Mammary epithelial cell (primary cell): ENCODE measurements at regions of chr18 and their contacts with region 1.

Region 1: GRCh38 chr18:44895176-44895798 is 214.6 kb downstream of the SETBP1 start:
- DNase-seq: peak; percentile 54
- H3K4me3 ChIP-seq: no peak overlapping the region
- H3K27ac ChIP-seq: no peak overlapping the region
- H3K4me1 ChIP-seq: peaks cover 9% of the 10 kb centered on the region
- H3K27me3 ChIP-seq: no peaks in the 10 kb centered on the region
- CTCF ChIP-seq: peak; percentile 56 to 76

Region 2: GRCh38 chr18:43380104-43380672 is 1515.1 kb before region 1 on chr18:
- CTCF ChIA-PET with region 1: no interaction called
- dilution Hi-C with region 1: no loop called
- in situ Hi-C with region 1: no loop called
- intact Hi-C with region 1: no loop called
- DNase-seq: no peak
- H3K4me3 ChIP-seq: no peak overlapping the region
- H3K27ac ChIP-seq: no peak overlapping the region
- H3K4me1 ChIP-seq: no peaks in the 10 kb centered on the region
- H3K27me3 ChIP-seq: no peaks in the 10 kb centered on the region
- CTCF ChIP-seq: no peak

Region 3: DNA sequence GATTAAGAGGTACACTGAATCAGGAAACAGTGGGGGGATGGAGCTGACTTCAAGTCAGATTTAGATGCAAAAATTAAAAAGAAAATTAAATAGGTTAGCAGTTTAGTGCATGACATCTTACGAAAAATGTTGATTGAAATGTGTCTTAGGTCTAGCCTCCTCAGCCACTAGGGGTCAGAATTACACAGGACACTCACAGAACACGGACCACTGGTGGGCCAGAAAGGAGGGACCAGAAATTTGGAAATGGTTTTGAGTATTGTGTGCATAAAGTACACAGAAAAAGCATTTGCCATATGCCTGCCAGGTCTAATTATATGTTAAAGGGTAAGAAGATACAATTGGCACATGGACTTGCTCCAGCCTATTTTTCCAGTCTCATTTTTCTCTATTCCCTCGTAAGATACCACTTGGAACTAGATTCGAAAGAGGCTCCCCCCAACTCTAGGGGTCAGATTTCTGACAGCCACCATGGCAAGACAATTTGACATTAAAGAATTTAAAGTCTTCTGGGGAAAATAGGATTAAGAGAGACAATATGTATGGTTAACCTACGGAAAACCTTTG is 764.8 kb before region 1 on chr18:
- CTCF ChIA-PET with region 1: no interaction called
- dilution Hi-C with region 1: no loop called
- in situ Hi-C with region 1: loop called in 1 of 2 experiments (anchors 25 kb)
- intact Hi-C with region 1: loop called (anchors 1 kb)
- DNase-seq: peak; percentile 26
- H3K4me3 ChIP-seq: no peak overlapping the region
- H3K27ac ChIP-seq: no peak overlapping the region
- H3K4me1 ChIP-seq: no peaks in the 10 kb centered on the region
- H3K27me3 ChIP-seq: no peaks in the 10 kb centered on the region
- CTCF ChIP-seq: peak; percentile 85 to 87

Region 4: DNA sequence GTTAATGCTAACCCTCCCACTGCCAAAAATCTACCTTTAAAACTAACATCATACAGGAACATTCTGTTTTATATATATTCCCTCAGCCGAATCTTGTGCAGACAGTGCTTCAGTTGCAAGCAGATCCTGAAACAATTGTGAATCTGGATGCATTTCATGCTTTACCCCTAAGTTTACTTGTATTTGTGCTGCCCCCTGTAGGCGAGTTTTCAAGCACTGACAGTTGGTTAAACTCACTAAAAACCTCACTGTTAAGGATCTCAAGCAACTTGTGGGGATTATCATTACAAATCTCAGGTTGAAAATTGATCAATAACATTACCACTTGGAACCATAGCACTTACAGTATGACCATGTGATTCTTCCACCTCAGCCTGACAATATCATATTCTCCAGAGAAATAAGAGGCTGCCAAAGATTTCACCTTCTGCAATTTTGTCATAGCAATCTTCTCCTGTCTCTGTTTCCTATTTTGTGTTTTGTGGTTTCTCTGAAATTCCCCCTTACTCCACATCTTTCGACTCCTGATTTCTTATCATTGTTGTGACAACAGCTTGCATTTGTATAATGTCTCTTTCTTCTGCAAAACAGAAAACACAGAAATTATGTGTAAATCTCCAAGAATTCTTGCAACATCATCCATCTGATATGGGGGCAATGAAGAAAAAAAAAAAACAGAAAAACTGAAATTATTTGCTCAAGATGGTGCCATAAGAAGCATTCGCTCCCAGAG is 569.2 kb before region 1 on chr18:
- CTCF ChIA-PET with region 1: no interaction called
- dilution Hi-C with region 1: no loop called
- in situ Hi-C with region 1: no loop called
- intact Hi-C with region 1: loop called (anchors 5 kb)
- DNase-seq: peak; percentile 40
- H3K4me3 ChIP-seq: no peak overlapping the region
- H3K27ac ChIP-seq: no peak overlapping the region
- H3K4me1 ChIP-seq: no peaks in the 10 kb centered on the region
- H3K27me3 ChIP-seq: no peaks in the 10 kb centered on the region
- CTCF ChIP-seq: peak; percentile 75 to 76

Region 5: GRCh38 chr18:44437603-44438002 is 457.7 kb before region 1 on chr18:
- CTCF ChIA-PET with region 1: no interaction called
- dilution Hi-C with region 1: no loop called
- in situ Hi-C with region 1: no loop called
- intact Hi-C with region 1: loop called (anchors 2 kb)
- DNase-seq: no peak
- H3K4me3 ChIP-seq: no peak overlapping the region
- H3K27ac ChIP-seq: no peak overlapping the region
- H3K4me1 ChIP-seq: no peaks in the 10 kb centered on the region
- H3K27me3 ChIP-seq: no peaks in the 10 kb centered on the region
- CTCF ChIP-seq: no peak

Region 6: GRCh38 chr18:44579028-44579702 is 316.1 kb before region 1 on chr18:
- CTCF ChIA-PET with region 1: no interaction called
- dilution Hi-C with region 1: no loop called
- in situ Hi-C with region 1: no loop called
- intact Hi-C with region 1: loop called (anchors 5 kb)
- DNase-seq: peak; percentile 59
- H3K4me3 ChIP-seq: no peak overlapping the region
- H3K27ac ChIP-seq: peak overlapping the region; percentile 1
- H3K4me1 ChIP-seq: peaks cover 6% of the 10 kb centered on the region
- H3K27me3 ChIP-seq: no peaks in the 10 kb centered on the region
- CTCF ChIP-seq: peak; percentile 60 to 68

Region 7: GRCh38 chr18:44733069-44733753 is 162.1 kb before region 1 on chr18:
- CTCF ChIA-PET with region 1: no interaction called
- dilution Hi-C with region 1: no loop called
- in situ Hi-C with region 1: no loop called
- intact Hi-C with region 1: loop called (anchors 5 kb)
- DNase-seq: peak; percentile 93
- H3K4me3 ChIP-seq: no peak overlapping the region
- H3K27ac ChIP-seq: peak overlapping the region; percentile 88
- H3K4me1 ChIP-seq: peaks cover 56% of the 10 kb centered on the region
- H3K27me3 ChIP-seq: no peaks in the 10 kb centered on the region
- CTCF ChIP-seq: no peak

Region 8: DNA sequence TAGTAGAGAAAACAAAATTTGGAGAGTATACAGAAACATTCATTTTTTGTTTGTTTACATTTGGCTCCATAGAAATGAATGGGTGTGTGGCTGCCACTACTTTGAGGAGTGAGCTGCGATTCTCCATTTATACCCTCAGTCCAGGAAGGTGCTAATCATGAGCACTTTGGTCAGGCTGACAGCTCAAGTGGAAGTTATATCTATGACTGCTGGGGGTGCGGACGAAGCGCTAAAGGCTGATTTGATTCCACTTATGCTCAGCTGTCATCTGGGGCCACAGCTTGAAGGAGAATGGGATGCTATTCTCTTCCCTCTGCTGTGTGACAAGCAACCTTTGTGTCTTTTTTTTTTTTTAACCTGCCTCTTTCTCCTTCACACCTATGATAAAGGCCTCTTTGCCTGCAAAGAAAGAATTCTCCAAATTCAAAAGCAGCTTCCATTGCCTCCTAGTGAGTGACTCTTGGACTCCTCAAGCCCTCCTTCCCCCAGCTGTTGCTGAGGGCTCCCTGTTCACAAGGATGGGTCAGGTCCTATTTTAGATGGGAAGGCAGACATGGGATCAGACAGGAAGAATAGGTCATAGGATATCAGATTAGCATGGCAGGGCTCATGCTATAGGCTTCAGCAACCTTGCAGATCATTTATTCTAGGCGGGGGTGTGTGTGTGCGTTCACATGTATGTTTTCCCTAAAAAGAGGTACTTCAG is 13.0 kb before region 1 on chr18:
- CTCF ChIA-PET with region 1: no interaction called
- dilution Hi-C with region 1: no loop called
- in situ Hi-C with region 1: no loop called
- intact Hi-C with region 1: no loop called
- DNase-seq: no peak
- H3K4me3 ChIP-seq: no peak overlapping the region
- H3K27ac ChIP-seq: no peak overlapping the region
- H3K4me1 ChIP-seq: peaks cover 11% of the 10 kb centered on the region
- H3K27me3 ChIP-seq: no peaks in the 10 kb centered on the region
- CTCF ChIP-seq: no peak

Region 9: DNA sequence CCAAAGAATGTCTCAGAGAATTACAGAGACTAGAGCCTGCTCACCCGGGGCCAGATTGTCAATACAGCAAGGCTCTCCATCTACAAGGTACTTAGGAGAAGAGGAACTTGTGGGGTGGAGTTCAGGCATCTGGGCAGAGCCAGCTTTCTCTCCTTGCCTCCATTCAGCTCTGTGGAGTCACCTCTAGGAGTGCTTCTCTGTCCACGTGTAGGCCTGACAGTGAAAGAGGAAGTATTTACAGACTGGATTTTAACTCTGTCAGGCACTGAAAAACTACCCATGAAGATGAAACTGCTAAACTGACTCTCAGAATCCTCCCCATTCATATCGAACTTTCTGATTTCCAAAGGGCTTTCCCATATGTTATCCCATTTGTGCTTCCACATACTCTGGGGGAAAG is 101.0 kb after region 1 on chr18:
- CTCF ChIA-PET with region 1: no interaction called
- dilution Hi-C with region 1: no loop called
- in situ Hi-C with region 1: no loop called
- intact Hi-C with region 1: no loop called
- DNase-seq: no peak
- H3K4me3 ChIP-seq: no peak overlapping the region
- H3K27ac ChIP-seq: no peak overlapping the region
- H3K4me1 ChIP-seq: no peaks in the 10 kb centered on the region
- H3K27me3 ChIP-seq: no peaks in the 10 kb centered on the region
- CTCF ChIP-seq: no peak

Region 10: DNA sequence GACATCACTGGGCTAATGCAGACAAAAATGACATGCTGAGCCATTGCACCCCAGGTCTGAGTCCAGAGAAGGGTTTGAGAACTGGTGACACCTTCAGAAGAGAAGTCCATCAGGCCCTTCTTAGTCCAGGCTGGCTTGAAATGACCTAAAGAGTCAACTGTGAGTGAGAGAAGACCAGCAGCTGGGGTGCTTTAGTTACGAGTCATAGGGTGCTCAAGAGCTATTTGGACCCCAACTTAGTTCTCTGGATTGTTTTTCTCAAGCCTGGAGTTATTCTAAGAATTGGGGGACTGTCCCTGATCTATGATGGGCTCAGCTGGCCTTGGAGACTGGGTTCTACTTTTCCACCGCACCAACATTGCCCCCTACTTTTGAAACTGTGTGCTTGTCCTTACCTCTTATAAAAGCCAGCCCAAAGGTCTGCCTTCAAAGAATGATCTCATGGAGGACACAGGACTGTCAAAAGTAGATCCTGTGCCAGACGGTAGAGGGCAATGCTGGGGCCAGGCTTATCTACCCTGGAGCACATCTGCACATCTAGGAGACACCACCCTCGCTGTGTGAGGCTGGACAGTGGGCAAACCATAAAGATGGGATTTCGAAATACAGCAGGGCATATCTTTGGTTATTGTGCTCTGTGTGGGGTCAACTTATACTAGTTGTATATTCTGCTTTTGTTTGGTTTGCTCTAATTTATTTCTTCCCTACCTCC is 387.0 kb after region 1 on chr18:
- CTCF ChIA-PET with region 1: no interaction called
- dilution Hi-C with region 1: no loop called
- in situ Hi-C with region 1: no loop called
- intact Hi-C with region 1: no loop called
- DNase-seq: no peak
- H3K4me3 ChIP-seq: no peak overlapping the region
- H3K27ac ChIP-seq: no peak overlapping the region
- H3K4me1 ChIP-seq: no peaks in the 10 kb centered on the region
- H3K27me3 ChIP-seq: peaks cover 3% of the 10 kb centered on the region
- CTCF ChIP-seq: peak in 1 of 2 donors; percentile 11